Endothelial cell of umbilical vein (primary cell): ENCODE measurements at regions of chrX and their contacts with region 1.

Region 1: DNA sequence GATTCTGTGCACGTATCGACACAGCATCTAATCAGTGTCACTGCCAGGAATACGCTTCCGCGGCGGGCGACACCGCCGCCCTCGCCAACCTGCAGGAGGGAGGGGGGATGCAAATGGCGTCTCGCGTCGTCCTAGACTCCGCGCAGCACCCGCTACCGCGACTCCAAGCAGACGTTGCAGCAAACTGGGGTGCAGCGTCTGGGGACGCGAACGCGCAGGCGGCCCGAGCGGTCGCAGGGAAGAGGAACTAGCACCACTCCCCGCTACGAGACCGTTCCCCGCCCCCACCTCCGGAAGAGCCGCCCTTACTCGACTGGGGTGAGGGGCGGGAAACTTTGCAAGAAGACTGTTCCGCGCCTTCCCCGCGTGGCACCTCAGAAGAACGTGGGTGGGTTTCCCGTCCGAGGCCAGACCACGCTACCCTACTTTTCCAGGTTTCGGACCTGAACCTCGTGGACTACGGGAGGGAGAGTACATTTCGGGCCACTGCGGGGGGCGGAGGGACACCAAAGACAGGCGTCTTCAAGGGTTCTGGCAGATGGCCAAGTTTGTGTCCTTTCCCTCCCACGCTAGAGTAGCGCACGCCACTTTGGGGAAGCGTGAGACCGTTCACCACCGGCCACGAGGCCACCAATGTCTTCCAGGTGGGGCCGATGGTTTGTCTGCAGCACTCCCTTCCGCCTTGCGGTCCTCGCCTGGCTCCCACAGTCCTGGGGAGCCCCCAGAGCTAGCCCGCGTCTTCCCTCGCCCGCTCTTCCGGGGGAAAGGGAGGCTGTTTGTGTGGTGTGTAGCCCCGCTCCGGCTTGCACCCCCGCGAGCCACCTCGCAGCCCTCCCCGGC is 78.0 kb upstream of the BCOR start:
- DNase-seq: peak; percentile 42
- H3K4me3 ChIP-seq: peak overlapping the region; percentile 6 to 49 (median 36)
- H3K27ac ChIP-seq: peak overlapping the region; percentile 66
- H3K4me1 ChIP-seq: peaks cover 39% of the 10 kb centered on the region
- H3K27me3 ChIP-seq: no peaks in the 10 kb centered on the region
- CTCF ChIP-seq: no peak
- POLR2A ChIP-seq: peak; percentile 33

Region 2: DNA sequence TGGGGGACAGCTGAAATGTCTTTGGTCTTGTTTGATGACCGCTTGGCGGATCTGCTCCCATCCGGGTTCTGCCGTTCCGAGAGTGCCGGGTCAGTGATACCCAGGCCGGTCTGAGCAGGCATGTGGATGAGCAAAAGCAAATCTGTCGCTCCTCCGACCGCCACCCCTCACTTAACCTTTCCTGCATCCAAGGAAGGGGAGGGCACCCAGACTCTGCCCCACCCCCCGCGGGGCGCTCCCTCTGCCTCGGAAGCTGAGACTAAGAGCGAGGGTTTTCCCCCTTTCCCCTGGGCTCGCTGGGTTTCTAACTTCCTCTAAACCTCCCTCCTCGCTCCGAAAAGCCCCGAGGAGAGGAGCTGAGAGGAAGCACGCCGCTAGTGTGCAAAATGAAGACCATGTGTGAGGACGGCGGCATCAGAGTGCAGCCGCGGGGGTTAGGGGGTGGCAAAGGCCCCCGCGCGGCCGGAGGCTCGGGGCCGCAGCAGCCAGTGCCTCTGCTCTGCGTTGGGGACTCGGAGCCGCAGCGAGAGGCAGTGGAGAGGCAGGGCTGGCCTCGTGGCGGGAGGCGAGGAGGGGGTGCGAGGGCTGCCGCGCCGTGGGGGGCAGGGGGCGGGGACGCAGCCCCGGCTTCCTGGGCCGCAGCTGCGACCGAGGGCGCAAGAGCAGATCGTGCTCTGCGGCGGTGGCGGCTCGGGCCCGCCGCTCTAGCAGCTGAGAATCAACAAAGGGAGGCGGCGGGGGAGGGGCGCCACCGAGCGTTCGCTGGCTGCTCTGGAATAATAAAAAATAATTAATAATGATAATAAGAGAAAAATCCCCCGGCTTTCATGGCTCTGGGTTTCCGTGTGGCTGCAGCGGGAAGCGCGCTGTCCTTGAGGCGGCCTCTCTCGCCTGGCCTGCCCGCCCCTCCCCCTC is 22.1 kb before region 1 on chrX:
- CTCF ChIA-PET with region 1: no interaction called
- POLR2A ChIA-PET with region 1: no interaction called
- dilution Hi-C with region 1: no loop called
- intact Hi-C with region 1: loop called (anchors 2 kb)
- DNase-seq: no peak
- H3K4me3 ChIP-seq: peak overlapping the region; percentile 7 to 38 (median 15)
- H3K27ac ChIP-seq: peak overlapping the region; percentile 12
- H3K4me1 ChIP-seq: peaks cover 32% of the 10 kb centered on the region
- H3K27me3 ChIP-seq: no peaks in the 10 kb centered on the region
- CTCF ChIP-seq: no peak
- POLR2A ChIP-seq: no peak

Region 3: DNA sequence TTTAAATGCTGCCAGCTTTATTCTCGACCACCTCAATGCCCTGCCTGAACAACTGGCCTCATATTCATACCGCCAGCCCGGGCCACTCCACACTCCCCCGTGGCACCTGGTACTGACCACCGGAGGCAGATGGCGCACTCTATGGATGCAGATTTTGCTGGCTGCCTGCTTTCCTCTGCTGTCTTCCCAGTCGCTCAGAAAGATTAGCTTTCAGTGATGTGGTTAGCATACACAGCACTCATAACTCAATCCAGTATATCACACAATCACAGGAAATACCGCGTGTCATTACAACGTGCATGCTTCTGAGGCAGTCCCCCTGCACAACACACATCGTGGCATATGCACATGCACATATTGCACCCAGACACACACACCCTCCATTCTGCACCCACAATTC is 69.2 kb after region 1 on chrX:
- CTCF ChIA-PET with region 1: interaction called, 9 read pairs
- POLR2A ChIA-PET with region 1: no interaction called
- dilution Hi-C with region 1: no loop called
- intact Hi-C with region 1: loop called (anchors 1 kb)
- DNase-seq: peak; percentile 77
- H3K4me3 ChIP-seq: no peak overlapping the region
- H3K27ac ChIP-seq: no peak overlapping the region
- H3K4me1 ChIP-seq: peaks cover 3% of the 10 kb centered on the region
- H3K27me3 ChIP-seq: no peaks in the 10 kb centered on the region
- CTCF ChIP-seq: no peak
- POLR2A ChIP-seq: no peak

Region 4: DNA sequence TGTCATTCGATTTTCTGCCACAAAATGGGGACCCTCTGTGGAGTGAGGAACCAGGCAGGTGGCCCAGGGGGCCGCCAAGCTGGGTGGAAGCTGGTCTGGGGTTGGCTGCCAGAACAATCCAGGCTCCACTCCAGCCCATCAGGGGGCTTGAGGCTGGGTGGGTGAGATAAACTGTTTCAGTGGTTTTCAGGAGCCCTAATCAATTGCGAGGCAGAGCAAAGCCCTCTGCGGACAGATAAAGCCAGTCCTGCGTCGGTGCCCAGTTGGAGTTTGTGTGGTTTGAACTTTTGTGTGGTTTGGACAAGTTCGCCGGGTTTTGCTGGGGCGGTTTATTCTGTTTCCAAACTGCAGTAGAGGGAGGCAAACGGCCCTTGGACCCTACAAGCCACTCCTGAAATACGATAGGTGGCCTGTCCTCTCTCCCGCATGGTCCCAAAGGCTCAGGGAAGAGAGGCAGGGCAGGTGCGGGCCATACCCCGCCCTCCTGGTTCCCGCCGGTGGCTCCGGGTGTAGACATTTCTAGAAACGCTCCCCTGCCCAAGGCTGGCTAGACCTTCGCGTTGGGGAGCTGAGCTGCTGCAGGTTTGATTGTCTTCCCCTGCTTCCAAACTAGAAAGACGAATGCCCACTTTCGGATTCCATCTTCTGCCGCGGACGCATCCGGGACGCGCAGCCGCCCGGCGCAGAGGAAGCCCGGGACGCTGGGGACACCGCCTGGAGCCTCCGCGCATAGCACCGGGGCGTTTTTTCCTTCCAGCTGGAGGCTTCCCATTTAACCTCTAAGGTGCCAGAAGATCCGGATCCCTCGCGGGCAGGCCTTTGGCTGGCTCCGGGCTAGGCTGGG is 91.0 kb after region 1 on chrX:
- CTCF ChIA-PET with region 1: no interaction called
- POLR2A ChIA-PET with region 1: no interaction called
- dilution Hi-C with region 1: no loop called
- intact Hi-C with region 1: loop called (anchors 2 kb)
- DNase-seq: peak; percentile 45
- H3K4me3 ChIP-seq: peak overlapping the region in 2 of 3 experiments; percentile 10 to 38
- H3K27ac ChIP-seq: peak overlapping the region; percentile 37
- H3K4me1 ChIP-seq: peaks cover 20% of the 10 kb centered on the region
- H3K27me3 ChIP-seq: no peaks in the 10 kb centered on the region
- CTCF ChIP-seq: peak; percentile 68 to 71
- POLR2A ChIP-seq: no peak

Region 5: DNA sequence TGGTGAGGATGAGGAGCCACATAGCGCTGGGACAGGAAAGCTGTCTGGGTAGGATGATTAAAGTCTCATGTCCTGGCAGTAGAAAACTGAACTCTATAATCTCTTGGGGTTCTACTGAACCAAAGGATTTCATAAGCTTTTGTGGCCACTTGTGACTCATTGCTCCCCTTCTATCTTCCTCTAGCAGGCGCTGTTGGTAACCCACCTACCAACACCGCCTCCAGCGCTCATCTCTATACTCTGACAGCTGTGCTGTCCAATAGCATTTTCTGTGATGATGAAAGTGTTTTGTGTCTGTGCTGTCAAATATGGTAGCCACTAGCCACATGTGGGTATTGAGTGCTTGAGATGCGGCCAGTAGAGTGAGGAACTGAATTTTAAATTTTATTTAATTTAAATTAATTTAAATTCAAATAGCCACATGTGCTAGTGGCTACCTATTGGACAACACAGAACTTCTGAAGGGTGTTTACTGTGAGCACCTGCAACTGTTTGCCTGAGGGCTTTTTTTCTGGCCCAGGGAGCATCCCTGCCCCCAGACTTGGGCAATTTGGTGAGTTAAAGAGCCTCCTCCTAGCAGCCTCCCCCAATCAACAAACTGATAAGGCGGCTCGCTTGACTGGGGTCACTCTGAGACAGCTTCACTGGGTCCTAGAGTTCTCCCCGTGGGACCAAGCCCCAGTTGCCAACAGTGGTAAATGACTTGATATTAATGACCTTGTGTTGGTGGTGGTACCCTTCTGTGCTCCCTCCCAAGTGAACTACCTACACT is 235.8 kb after region 1 on chrX:
- CTCF ChIA-PET with region 1: no interaction called
- POLR2A ChIA-PET with region 1: no interaction called
- dilution Hi-C with region 1: no loop called
- intact Hi-C with region 1: no loop called
- DNase-seq: no peak
- H3K4me3 ChIP-seq: no peak overlapping the region
- H3K27ac ChIP-seq: no peak overlapping the region
- H3K4me1 ChIP-seq: no peaks in the 10 kb centered on the region
- H3K27me3 ChIP-seq: peaks cover 0 to 2% of the 10 kb centered on the region in 2 experiments
- CTCF ChIP-seq: no peak
- POLR2A ChIP-seq: no peak